ENCODE measurements at regions of chr1 and their contacts with region 1.

Region 1: DNA sequence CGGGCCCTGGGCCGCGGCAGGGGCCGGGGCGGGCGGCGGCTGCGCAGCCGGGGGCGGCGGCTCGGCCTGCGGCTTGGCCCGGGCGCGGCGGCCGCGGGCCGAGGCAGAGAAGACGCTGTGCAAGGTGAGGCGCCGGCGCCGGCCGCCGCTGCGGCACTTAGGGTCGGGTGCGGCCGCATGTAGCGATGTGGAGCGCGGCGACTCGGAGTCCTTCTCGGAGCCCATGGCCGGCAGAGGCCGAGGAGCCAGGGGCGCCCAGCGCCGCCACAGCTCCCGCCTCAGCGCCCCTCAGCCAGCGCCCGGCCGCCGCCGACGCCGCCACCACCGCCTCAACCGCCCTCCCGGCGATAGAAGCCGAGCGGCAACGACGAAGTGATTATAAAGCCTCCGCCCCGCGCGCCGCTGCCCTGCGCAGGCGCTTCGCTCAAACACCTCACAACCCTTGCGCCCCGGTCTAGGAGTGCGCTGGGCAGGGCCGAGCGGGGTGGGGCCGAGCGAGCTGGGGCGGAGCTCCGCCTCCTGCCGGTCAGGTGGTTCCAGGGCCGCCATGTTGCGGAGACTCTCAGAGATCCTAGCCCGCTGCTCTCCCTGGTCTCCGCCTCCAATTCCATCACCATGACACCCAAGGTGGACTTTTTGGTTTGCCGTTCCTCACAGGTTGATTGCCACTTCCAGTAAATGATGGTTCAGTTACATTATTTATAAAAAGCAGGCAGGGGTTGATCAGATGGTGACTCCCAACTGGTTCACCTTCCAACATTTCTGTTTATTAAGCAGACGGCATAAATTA is at the start of gene RNF19B:
- DNase-seq: peak; percentile 89 to 96 (median 92)
- H3K4me3 ChIP-seq: peak within 1 kb of the TSS; percentile 78
- H3K4me3 Mint-ChIP-seq: peak within 1 kb of the TSS; percentile 85 to 96 (median 89)
- H3K27ac ChIP-seq: peak within 1 kb of the TSS; percentile 58
- H3K27ac Mint-ChIP-seq: peak within 1 kb of the TSS; percentile 84 to 98 (median 93)
- H3K4me1 ChIP-seq: peaks cover 21% of the 10 kb centered on the region
- H3K4me1 Mint-ChIP-seq: peaks cover 34 to 45% (median 44%) of the 10 kb centered on the region in 3 donors
- H3K27me3 ChIP-seq: no peaks in the 10 kb centered on the region
- H3K27me3 Mint-ChIP-seq: peaks cover 4 to 5% of the 10 kb centered on the region in 2 donors
- total RNA-seq, gene RNF19B: 39.6 to 39.9 TPM

Region 2: GRCh38 chr1:32981003-32981901 is 16.6 kb after region 1 on chr1:
- CTCF ChIA-PET with region 1: interaction called, 4 read pairs
- POLR2A ChIA-PET with region 1: interaction called, 27 read pairs
- DNase-seq: peak; percentile 34 to 73 (median 56)
- H3K4me3 ChIP-seq: peak overlapping the region; percentile 40
- H3K4me3 Mint-ChIP-seq: peak overlapping the region; percentile 73 to 88 (median 83)
- H3K27ac ChIP-seq: peak overlapping the region; percentile 79
- H3K27ac Mint-ChIP-seq: peak overlapping the region; percentile 93 to 99 (median 98)
- H3K4me1 ChIP-seq: peaks cover 15% of the 10 kb centered on the region
- H3K4me1 Mint-ChIP-seq: peaks cover 18 to 39% (median 36%) of the 10 kb centered on the region in 3 donors
- H3K27me3 ChIP-seq: no peaks in the 10 kb centered on the region
- H3K27me3 Mint-ChIP-seq: peaks cover 0 to 2% of the 10 kb centered on the region in 2 donors

Measured in CD8-positive, alpha-beta memory T cell (primary cell).